Esophagus muscularis mucosa (tissue), 4 donors: ENCODE measurements at regions of chr2 and their contacts with region 1.

Region 1: GRCh38 chr2:150610671-150611279 is 123.3 kb upstream of the RND3 start:
- DNase-seq: no peak
- H3K4me3 ChIP-seq: no peak overlapping the region
- H3K27ac ChIP-seq: peak overlapping the region in 1 of 4 donors; percentile 12
- H3K4me1 ChIP-seq: peaks cover 6 to 36% (median 30%) of the 10 kb centered on the region in 4 donors
- H3K27me3 ChIP-seq: no peaks in the 10 kb centered on the region
- CTCF ChIP-seq: peak; percentile 44 to 60 (median 47)
- EP300 ChIP-seq: no peak
- POLR2A ChIP-seq: no peak

Region 2: GRCh38 chr2:150425121-150425955 is 185.4 kb before region 1 on chr2:
- intact Hi-C with region 1: loop called (anchors 10 kb)
- DNase-seq: no peak
- H3K4me3 ChIP-seq: peak overlapping the region in 1 of 4 donors; percentile 10
- H3K27ac ChIP-seq: no peak overlapping the region
- H3K4me1 ChIP-seq: no peaks in the 10 kb centered on the region
- H3K27me3 ChIP-seq: no peaks in the 10 kb centered on the region
- CTCF ChIP-seq: peak in 2 of 3 experiments; percentile 23 to 43
- EP300 ChIP-seq: no peak
- POLR2A ChIP-seq: no peak

Region 3: DNA sequence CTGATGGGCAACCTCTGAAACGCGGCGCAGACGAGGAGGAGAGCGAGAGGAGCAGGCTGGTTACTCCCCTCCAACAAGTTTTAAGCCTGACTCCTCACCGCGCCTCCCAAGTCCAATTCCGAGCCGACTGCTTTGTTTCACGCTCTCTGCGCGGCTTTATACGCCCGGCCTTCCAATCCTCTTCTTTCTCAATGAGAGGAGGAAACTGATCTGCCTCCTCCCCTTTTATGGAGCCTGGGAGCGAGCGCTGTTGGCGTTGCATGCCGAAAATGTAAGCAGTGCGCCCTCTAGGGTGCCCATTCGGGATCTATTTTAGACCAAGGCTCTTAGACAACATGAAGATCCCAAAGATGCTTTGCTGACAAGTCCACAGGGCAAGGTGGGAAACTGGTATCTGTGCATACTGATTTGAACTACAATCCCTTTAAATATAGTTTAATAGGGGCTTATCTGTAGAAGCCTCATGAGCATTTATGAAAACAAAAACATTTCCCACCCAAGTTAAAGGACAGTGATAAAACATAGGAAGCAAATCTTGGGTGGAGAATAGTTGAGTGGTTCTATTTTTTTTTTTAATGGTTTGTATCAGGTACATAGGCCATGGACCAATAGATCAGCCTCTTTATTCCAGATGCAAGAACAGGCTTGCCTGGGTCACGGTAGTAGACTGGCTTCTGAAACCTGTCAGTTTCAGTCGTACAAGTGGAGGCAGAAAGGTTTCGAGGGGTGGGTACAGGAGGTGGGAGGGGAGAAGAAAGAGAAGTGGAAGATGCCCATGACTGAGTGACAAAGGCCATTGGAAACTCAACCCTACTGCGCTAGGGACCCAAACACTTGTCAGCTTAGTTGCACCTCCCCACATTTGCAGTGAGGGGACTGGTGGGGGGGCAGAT is 123.0 kb before region 1 on chr2 and contains the start of gene RND3:
- intact Hi-C with region 1: loop called (anchors 5 kb)
- DNase-seq: peak; percentile 99
- H3K4me3 ChIP-seq: peak within 1 kb of the TSS; percentile 79 to 88 (median 85)
- H3K27ac ChIP-seq: peak within 1 kb of the TSS; percentile 95 to 98 (median 96)
- H3K4me1 ChIP-seq: peaks cover 20 to 22% (median 21%) of the 10 kb centered on the region in 4 donors
- H3K27me3 ChIP-seq: no peaks in the 10 kb centered on the region
- CTCF ChIP-seq: peak; percentile 85 to 91 (median 86)
- EP300 ChIP-seq: no peak
- POLR2A ChIP-seq: peak; percentile 96
- total RNA-seq, gene RND3: 39.6 to 219 (median 73.5) TPM